ENCODE measurements at regions of chr2 and their contacts with region 1.

Region 1: GRCh38 chr2:234951664-234952269 is at the start of gene SH3BP4:
- DNase-seq: peak; percentile 88 to 95
- H3K4me3 ChIP-seq: peak within 1 kb of the TSS; percentile 77 to 90 (median 85)
- H3K27ac ChIP-seq: peak within 1 kb of the TSS; percentile 89 to 96 (median 94)
- H3K4me1 ChIP-seq: peaks cover 23 to 56% (median 49%) of the 10 kb centered on the region in 4 donors
- H3K27me3 ChIP-seq: peaks cover 0 to 42% (median 3%) of the 10 kb centered on the region in 3 donors
- CTCF ChIP-seq: no peak
- EP300 ChIP-seq: no peak
- POLR2A ChIP-seq: no peak
- total RNA-seq, gene SH3BP4: 12.8 to 54.0 (median 41.5) TPM

Region 2: DNA sequence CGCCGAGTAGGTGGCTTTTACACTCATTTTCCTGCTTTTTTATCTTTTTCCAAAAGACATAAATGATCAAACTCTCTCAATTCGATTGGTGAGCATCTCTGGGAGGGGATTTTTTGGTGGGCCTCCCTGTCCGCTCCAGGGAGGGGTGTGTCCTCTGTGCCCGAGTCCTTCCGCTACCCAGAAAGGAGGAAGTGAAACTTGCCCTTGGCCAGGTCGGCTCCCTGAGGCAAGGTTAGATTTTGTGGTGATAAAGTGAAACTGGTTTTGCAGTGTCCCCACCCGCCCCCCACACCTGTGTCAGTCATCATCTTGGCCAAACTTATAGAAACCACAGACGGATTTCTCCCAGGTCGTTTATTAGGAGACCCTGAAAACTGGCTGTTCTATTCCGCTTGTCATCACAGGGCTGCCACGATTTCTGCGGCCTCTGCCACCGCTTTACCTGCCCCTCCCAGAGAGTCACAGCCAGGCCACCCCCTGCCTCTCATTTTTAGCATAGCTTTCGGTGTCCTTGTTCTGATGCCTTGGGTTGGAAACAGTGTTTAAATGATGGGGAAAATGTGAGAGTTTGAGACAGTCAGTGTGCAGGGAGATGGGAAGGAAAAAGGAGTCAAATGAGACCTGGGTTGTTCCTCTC is 93.7 kb after region 1 on chr2:
- intact Hi-C with region 1: loop called (anchors 10 kb)
- DNase-seq: peak; percentile 60 to 68
- H3K4me3 ChIP-seq: no peak overlapping the region
- H3K27ac ChIP-seq: peak overlapping the region; percentile 6 to 78 (median 74)
- H3K4me1 ChIP-seq: peaks cover 38 to 65% (median 52%) of the 10 kb centered on the region in 4 donors
- H3K27me3 ChIP-seq: no peaks in the 10 kb centered on the region
- CTCF ChIP-seq: no peak
- EP300 ChIP-seq: no peak
- POLR2A ChIP-seq: no peak